Colonic mucosa (tissue), 4 donors: ENCODE measurements at regions of chr6 and their contacts with region 1.

Region 1: GRCh38 chr6:150891888-150892485 is 26.5 kb downstream of the MTHFD1L start:
- DNase-seq: peak; percentile 71
- H3K4me3 ChIP-seq: no peak overlapping the region
- H3K27ac ChIP-seq: no peak overlapping the region
- H3K4me1 ChIP-seq: no peaks in the 10 kb centered on the region
- H3K27me3 ChIP-seq: no peaks in the 10 kb centered on the region
- CTCF ChIP-seq: peak; percentile 84

Region 2: GRCh38 chr6:151014404-151015100 is 122.6 kb after region 1 on chr6:
- intact Hi-C with region 1: loop called (anchors 5 kb)
- DNase-seq: peak; percentile 70
- H3K4me3 ChIP-seq: no peak overlapping the region
- H3K27ac ChIP-seq: no peak overlapping the region
- H3K4me1 ChIP-seq: no peaks in the 10 kb centered on the region
- H3K27me3 ChIP-seq: no peaks in the 10 kb centered on the region
- CTCF ChIP-seq: peak; percentile 98

Region 3: GRCh38 chr6:151323791-151324487 is 432.0 kb after region 1 on chr6:
- intact Hi-C with region 1: loop called (anchors 2 kb)
- DNase-seq: peak; percentile 83
- H3K4me3 ChIP-seq: no peak overlapping the region
- H3K27ac ChIP-seq: no peak overlapping the region
- H3K4me1 ChIP-seq: no peaks in the 10 kb centered on the region
- H3K27me3 ChIP-seq: peaks cover 11% of the 10 kb centered on the region
- CTCF ChIP-seq: peak; percentile 98

Region 4: GRCh38 chr6:151335930-151336329 is 443.9 kb after region 1 on chr6:
- intact Hi-C with region 1: loop called (anchors 2 kb)
- DNase-seq: no peak
- H3K4me3 ChIP-seq: no peak overlapping the region
- H3K27ac ChIP-seq: no peak overlapping the region
- H3K4me1 ChIP-seq: no peaks in the 10 kb centered on the region
- H3K27me3 ChIP-seq: no peaks in the 10 kb centered on the region
- CTCF ChIP-seq: no peak